ENCODE measurements at regions of chr11 and their contacts with region 1.

Region 1: DNA sequence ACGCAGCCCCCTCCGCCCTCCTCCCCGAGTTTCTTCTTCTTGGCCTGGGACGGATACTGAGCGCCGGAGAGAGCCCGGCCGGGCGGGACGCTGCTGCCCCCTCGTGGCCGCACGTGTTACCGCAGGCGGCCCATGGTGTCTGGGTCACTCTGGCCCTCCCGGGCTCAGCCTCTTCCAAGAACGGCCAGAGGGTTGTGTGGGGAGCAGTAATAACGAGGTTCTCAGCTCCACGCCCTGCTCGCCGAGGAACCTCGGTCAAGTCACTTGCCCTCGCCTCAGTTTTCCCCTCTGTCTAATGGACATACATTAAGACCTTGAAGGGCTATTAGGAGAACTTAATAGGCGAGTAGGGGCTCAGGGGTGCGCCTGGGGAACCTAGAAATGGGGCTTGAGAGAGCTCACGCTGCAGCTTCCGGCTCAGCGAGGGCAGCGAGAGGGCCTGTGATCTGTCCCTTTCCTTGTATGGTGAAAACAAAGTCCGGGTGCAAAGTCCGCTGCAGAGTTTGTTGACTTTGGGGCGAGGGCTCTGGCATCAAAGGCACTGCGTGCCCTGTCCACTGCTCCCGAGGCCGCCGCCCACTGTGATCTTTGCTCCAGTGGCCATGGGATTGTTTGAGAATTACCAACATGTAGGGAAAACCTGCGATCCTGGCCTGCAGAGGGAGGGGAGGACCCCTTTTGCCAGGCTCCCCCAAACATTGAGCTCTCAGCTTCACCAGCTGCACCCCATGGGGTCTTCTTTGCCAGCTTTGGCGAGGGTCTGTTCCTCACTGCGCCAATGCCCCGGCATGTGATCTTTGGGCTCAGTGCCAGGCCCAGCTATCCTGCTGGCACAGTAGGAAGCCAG is 14.4 kb upstream of the LRP5 start:
- DNase-seq: peak; percentile 98
- ATAC-seq: peak; percentile 85
- H3K4me3 ChIP-seq: peak overlapping the region; percentile 68 to 83 (median 69)
- H3K27ac ChIP-seq: peak overlapping the region; percentile 100
- H3K4me1 ChIP-seq: peaks cover 59% of the 10 kb centered on the region
- H3K27me3 ChIP-seq: no peaks in the 10 kb centered on the region; a peak in 1 of 5 replicates
- CTCF ChIP-seq: peak; percentile 97
- EP300 ChIP-seq: peak; percentile 98
- POLR2A ChIP-seq: peak; percentile 73 to 81
- RAD21 ChIP-seq: peak; percentile 96

Region 2: GRCh38 chr11:68213555-68214174 is 84.4 kb before region 1 on chr11:
- CTCF ChIA-PET with region 1: interaction called, 9 read pairs
- POLR2A ChIA-PET with region 1: interaction called, 73 read pairs
- in situ Hi-C with region 1: loop called (anchors 5 kb)
- intact Hi-C with region 1: loop called (anchors 2 kb)
- DNase-seq: peak; percentile 76
- ATAC-seq: peak; percentile 16
- H3K4me3 ChIP-seq: peak overlapping the region; percentile 63 to 74 (median 63)
- H3K27ac ChIP-seq: peak overlapping the region; percentile 98
- H3K4me1 ChIP-seq: peaks cover 67% of the 10 kb centered on the region
- H3K27me3 ChIP-seq: no peaks in the 10 kb centered on the region; a peak in 1 of 5 replicates
- CTCF ChIP-seq: peak; percentile 16; the same call in 1 of the 2 replicates
- EP300 ChIP-seq: no peak
- POLR2A ChIP-seq: peak; percentile 97
- RAD21 ChIP-seq: peak; percentile 76

Region 3: DNA sequence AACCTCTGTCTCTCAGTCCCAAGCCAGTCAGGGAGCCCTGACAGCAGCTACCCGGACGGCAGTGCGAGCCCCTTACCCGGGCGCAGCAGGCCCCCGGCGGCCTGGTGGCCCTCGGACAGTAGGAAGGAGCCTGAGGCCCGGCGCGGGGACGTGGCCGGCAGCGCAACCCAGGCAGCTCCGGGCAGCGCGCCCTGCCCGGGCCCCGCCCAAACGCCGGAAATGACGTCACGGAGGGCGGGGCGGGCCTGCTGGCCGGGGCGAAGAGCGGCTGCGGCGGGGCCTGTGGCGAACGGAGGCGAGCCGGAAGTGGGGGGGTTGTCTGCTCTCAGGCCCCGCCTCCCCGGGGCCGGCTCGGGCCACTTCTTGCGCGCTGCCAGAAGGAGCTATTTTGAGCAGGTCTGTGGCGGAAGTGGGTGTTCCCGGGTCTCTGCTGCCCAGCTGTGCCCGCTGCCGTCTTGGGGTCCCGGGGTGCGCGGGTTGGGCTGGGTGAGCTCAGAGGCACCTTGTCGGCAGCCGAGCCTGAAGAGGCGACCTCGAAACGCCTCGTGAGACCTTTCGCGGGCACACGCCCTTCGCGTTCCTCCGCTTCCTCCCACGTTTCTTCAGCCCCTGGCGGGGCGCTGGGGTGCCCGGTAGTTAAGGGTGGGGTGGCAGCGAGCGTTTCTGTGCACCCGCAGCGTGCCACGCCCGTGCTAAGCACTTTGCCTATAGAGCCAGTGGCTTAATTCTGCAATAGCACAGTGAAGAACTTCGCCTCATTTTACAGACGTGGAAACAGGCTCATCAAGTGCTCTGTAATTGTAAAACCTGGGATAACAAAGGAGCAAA is 26.0 kb before region 1 on chr11 and contains the start of gene C11orf24:
- CTCF ChIA-PET with region 1: interaction called, 22 read pairs
- POLR2A ChIA-PET with region 1: interaction called, 220 read pairs
- in situ Hi-C with region 1: no loop called
- intact Hi-C with region 1: loop called (anchors 1 kb)
- DNase-seq: peak; percentile 84
- ATAC-seq: peak; percentile 90
- H3K4me3 ChIP-seq: peak within 1 kb of the TSS; percentile 97 to 99 (median 98)
- H3K27ac ChIP-seq: peak within 1 kb of the TSS; percentile 92
- H3K4me1 ChIP-seq: peaks cover 74% of the 10 kb centered on the region
- H3K27me3 ChIP-seq: no peaks in the 10 kb centered on the region; a peak in 1 of 5 replicates
- CTCF ChIP-seq: no peak; the same call in 1 of the 2 replicates
- EP300 ChIP-seq: 0 out of 4 replicates have a peak, but pooled peaks have one; percentile 12 to 24
- POLR2A ChIP-seq: peak; percentile 57 to 96; a peak in 3 of 4 replicates
- RAD21 ChIP-seq: no peak
- total RNA-seq, gene C11orf24: 50.8 and 55.5 TPM in 2 replicates

Region 4: GRCh38 chr11:68321293-68322041 is 23.4 kb after region 1 on chr11:
- CTCF ChIA-PET with region 1: no interaction called
- POLR2A ChIA-PET with region 1: interaction called, 209 read pairs
- in situ Hi-C with region 1: no loop called
- intact Hi-C with region 1: no loop called
- DNase-seq: peak; percentile 56
- ATAC-seq: no peak
- H3K4me3 ChIP-seq: no peak overlapping the region
- H3K27ac ChIP-seq: peak overlapping the region; percentile 8
- H3K4me1 ChIP-seq: peaks cover 95% of the 10 kb centered on the region
- H3K27me3 ChIP-seq: no peaks in the 10 kb centered on the region
- CTCF ChIP-seq: no peak
- EP300 ChIP-seq: no peak
- POLR2A ChIP-seq: no peak
- RAD21 ChIP-seq: no peak

Region 5: GRCh38 chr11:68370211-68371111 is 72.4 kb after region 1 on chr11:
- CTCF ChIA-PET with region 1: no interaction called
- POLR2A ChIA-PET with region 1: interaction called, 15 read pairs
- in situ Hi-C with region 1: no loop called
- intact Hi-C with region 1: no loop called
- DNase-seq: no peak
- ATAC-seq: no peak
- H3K4me3 ChIP-seq: no peak overlapping the region
- H3K27ac ChIP-seq: no peak overlapping the region
- H3K4me1 ChIP-seq: peaks cover 40% of the 10 kb centered on the region
- H3K27me3 ChIP-seq: no peaks in the 10 kb centered on the region
- CTCF ChIP-seq: no peak
- EP300 ChIP-seq: no peak
- POLR2A ChIP-seq: no peak
- RAD21 ChIP-seq: no peak

Region 6: GRCh38 chr11:68459886-68460740 is 162.1 kb after region 1 on chr11:
- CTCF ChIA-PET with region 1: no interaction called
- POLR2A ChIA-PET with region 1: interaction called, 10 read pairs
- in situ Hi-C with region 1: no loop called
- intact Hi-C with region 1: no loop called
- DNase-seq: peak; percentile 97
- ATAC-seq: peak; percentile 83
- H3K4me3 ChIP-seq: peak overlapping the region; percentile 83 to 95 (median 94); a peak in 5 of 6 replicates
- H3K27ac ChIP-seq: peak overlapping the region; percentile 97
- H3K4me1 ChIP-seq: peaks cover 82% of the 10 kb centered on the region
- H3K27me3 ChIP-seq: no peaks in the 10 kb centered on the region; a peak in 1 of 5 replicates
- CTCF ChIP-seq: 0 out of 2 replicates have a peak, but pooled peaks have one; percentile 5
- EP300 ChIP-seq: peak; percentile 10 to 48; a peak in 1 of 4 replicates
- POLR2A ChIP-seq: peak; percentile 21 to 54; a peak in 3 of 4 replicates
- RAD21 ChIP-seq: no peak